ENCODE measurements at regions of chr22 and their contacts with region 1.

Region 1: GRCh38 chr22:44975427-44976262 is 34.2 kb downstream of the PHF21B start:
- DNase-seq: peak; percentile 83
- ATAC-seq: peak; percentile 76

Region 2: GRCh38 chr22:45101515-45102227 is 126.0 kb after region 1 on chr22:
- intact Hi-C with region 1: loop called (anchors 10 kb)
- DNase-seq: peak; percentile 76
- ATAC-seq: peak; percentile 31